AG04449 (cell line): ENCODE measurements at regions of chr17 and their contacts with region 1.

Region 1: DNA sequence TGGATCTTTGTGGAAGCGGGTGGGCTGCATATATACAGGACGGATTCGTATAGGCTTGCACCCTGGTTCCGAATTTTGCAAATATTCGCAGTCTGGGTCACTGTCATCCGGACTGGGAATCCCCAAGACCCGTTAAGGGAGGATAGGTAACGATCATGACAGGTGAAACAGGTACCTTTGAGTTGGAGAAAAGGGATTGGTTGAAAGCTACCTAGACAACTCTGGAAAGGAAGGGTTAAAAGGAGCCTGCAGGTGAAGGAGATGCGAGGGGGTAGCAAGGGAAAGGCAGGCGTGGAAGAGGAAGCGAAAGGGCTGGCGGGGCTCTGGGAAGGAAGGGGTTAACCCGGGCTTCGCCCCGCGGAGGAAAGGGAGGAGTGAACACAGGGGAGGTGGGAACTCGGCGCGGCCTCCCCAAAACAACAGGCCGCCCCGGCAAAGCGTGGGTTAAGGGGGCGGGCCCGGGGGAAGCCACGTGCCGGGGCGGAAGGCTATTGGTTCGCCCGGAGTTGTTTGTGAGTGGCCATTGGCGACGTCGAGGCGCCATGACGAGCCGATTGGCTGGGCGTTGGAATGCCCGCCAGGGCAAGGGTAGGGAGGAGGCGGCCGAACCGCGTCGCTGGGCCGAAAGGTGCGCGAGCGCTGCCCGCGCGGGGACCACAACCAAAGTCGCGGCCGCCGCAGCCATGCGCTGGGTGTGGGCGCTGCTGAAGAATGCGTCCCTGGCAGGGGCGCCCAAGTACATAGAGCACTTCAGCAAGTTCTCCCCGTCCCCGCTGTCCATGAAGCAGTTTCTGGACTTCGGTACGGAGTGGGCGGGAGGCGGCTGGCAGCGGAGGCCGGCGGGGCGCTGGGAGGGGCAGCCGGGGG is at the start of gene PDK2:
- DNase-seq: peak; percentile 47
- H3K4me3 ChIP-seq: peak within 1 kb of the TSS; percentile 89
- CTCF ChIP-seq: no peak

Region 2: DNA sequence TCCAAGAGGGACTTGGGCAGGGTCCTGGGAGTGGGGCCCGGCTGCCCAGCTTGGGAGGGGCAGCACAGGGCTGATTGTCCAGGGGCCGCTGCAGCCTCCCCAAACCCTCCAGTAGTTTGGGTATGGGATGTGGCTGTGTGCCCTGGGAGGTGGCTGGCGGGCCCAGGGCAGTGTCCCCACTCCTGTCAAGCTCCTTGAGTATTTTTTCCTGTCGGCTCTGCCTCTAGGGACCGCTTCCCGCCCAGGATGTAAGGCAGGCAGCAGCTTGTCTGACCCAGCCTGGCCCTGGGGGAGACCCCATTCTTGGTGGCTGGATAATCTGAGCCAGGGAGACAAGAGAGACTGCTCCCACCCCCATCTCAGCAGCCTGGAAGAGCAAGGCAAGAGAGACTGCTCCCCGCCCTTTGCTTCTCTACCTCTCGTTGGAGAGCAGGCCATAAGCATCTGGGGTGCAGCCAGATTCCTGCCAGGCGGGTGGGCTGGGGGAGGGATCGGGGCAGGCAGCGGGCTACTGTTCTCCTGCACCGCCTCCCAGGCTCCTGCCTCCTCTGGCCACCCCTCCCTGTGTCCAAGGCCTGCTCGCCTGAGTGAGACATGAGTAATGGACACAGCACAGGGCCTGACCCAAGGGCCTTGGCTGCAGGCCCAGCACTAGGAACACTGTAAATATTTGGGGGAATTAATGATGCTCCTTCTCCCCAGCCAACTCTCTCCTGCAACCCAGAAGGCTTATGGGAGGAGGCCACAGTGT is 57.5 kb before region 1 on chr17:
- CTCF ChIA-PET with region 1: interaction called, 165 read pairs
- POLR2A ChIA-PET with region 1: no interaction called
- DNase-seq: no peak
- H3K4me3 ChIP-seq: no peak overlapping the region
- CTCF ChIP-seq: no peak

Region 3: DNA sequence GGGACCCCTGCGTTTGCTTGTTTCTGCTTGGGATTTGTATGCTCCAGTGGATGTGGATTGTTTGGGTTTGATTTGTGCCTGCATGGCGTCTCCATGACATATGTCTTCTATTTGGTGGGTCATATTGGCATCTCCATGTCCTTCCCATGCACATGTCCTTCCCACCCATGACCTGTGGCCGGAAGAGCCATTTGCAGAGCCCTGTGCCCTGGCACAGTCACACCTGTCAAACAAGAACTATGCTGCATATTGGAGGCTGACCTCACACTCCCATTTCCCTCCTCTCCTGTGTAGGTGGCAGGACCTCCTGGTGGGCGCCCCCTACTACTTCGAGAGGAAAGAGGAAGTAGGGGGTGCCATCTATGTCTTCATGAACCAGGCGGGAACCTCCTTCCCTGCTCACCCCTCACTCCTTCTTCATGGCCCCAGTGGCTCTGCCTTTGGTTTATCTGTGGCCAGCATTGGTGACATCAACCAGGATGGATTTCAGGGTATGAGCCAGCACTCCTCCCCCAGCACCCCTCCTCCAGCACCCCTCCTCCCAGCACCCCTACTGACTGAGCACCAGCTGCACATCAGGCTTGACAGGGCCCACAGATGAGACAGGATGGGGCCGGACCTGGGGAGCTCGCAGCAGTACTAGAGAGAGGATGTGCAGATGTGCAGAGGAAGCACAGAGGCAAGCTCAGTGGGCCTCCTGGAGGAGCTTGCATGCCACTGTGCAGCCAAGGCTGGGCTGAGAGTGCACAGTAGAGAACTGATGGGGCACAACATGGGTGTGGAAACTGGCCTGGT is 23.1 kb before region 1 on chr17:
- CTCF ChIA-PET with region 1: interaction called, 93 read pairs
- POLR2A ChIA-PET with region 1: no interaction called
- DNase-seq: no peak
- H3K4me3 ChIP-seq: no peak overlapping the region
- CTCF ChIP-seq: no peak

Region 4: GRCh38 chr17:50123649-50124349 is 28.8 kb after region 1 on chr17:
- CTCF ChIA-PET with region 1: interaction called, 92 read pairs
- POLR2A ChIA-PET with region 1: no interaction called
- DNase-seq: no peak
- H3K4me3 ChIP-seq: no peak overlapping the region
- CTCF ChIP-seq: no peak

Region 5: GRCh38 chr17:50169121-50169764 is 74.3 kb after region 1 on chr17:
- CTCF ChIA-PET with region 1: interaction called, 29 read pairs
- POLR2A ChIA-PET with region 1: no interaction called
- DNase-seq: no peak
- H3K4me3 ChIP-seq: no peak overlapping the region
- CTCF ChIP-seq: peak; percentile 84

Region 6: DNA sequence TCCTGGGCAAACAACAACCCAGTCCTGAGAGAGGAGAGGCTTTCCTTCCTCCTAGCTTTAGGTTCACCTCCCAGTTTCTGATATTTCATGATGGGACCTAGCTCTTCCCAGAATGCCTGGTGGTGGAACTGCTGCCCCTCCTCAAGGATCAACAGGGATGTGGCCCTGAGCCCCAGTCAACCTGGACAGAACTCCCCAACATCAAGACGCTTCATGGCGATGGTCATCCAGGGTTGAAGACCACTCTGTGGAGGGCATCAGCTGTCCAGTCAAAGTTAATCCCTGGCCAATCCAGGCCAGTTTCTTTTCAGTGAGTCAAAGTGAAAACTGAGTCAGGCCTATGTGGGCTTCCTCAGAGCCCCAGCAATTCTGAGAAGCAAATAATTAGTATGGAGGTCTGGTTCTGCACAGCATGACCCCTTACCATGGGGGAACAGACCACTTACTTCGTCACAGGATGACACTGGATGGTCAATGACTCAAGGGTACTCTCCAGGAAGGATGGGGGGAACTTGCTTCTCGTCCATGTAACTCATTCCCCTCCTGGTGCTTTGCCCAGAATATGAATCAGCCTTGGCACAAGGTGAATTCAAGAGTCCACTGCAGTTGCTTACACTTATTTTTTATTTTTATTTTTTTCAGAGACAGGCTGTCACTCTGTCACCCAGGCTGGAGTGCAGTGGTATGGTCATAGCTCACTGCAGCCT is 236.3 kb after region 1 on chr17:
- CTCF ChIA-PET with region 1: interaction called, 10 read pairs
- POLR2A ChIA-PET with region 1: no interaction called
- DNase-seq: peak; percentile 68
- H3K4me3 ChIP-seq: no peak overlapping the region
- CTCF ChIP-seq: no peak